ENCODE measurements at regions of chr9 and their contacts with region 1.

Region 1: GRCh38 chr9:30967484-30967883 is 1417.0 kb upstream of the ACO1 start:
- DNase-seq: no peak
- ATAC-seq: no peak
- H3K4me3 ChIP-seq: no peak overlapping the region
- H3K27ac ChIP-seq: no peak overlapping the region
- H3K4me1 ChIP-seq: no peaks in the 10 kb centered on the region
- H3K27me3 ChIP-seq: no peaks in the 10 kb centered on the region
- CTCF ChIP-seq: no peak

Region 2: GRCh38 chr9:30913331-30913730 is 54.2 kb before region 1 on chr9:
- intact Hi-C with region 1: loop called in 1 of 10 experiments (anchors 10 kb)
- DNase-seq: no peak
- ATAC-seq: no peak
- H3K4me3 ChIP-seq: no peak overlapping the region
- H3K27ac ChIP-seq: no peak overlapping the region
- H3K4me1 ChIP-seq: no peaks in the 10 kb centered on the region
- H3K27me3 ChIP-seq: no peaks in the 10 kb centered on the region
- CTCF ChIP-seq: no peak

Region 3: DNA sequence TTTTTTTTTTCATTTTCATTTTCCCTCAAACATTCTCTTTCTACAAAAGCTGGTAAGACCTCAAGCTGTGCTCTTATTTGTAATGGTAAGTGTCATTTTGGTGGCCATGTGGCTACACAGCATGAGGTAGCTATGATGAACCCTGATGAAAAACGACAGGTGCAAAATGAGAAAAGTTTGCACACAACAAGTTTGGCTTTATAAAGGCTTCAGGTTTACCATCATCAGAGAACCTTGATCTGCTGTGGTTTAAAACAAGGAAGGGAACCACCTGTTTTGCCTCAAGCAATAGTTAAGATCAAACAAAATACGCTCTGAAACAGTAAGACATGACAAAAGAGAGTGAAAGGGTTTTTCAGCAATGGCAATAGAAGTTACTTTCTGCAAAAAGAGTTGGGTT is 292.3 kb after region 1 on chr9:
- intact Hi-C with region 1: no loop called
- DNase-seq: no peak
- ATAC-seq: no peak
- H3K4me3 ChIP-seq: no peak overlapping the region
- H3K27ac ChIP-seq: no peak overlapping the region
- H3K4me1 ChIP-seq: no peaks in the 10 kb centered on the region
- H3K27me3 ChIP-seq: no peaks in the 10 kb centered on the region
- CTCF ChIP-seq: no peak